Calu3 (cell line): ENCODE measurements at regions of chr1 and their contacts with region 1.

Region 1: DNA sequence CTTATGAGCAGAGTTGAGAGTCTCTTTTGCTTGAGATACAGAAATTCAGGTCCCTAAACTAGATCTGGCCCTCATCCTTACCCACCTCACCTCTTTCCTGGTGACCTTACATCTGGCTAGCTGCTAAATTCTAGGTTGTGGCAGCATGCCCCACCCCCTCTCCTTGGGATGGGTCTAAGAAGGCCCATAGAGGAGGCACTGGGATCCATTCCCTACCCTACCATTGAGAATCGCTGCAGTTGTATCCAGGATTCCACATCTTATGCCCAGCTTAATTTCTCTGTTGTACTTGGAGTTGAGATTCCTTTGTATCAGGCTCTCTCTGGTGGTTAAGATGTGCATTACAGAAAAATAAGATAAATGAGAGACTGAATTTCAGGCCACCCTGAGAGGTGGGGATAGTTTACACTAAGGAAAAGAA is 9.5 kb upstream of the TMEM39B start:
- DNase-seq: no peak
- H3K4me3 Mint-ChIP-seq: no peak overlapping the region
- H3K27ac Mint-ChIP-seq: peak overlapping the region; percentile 49
- H3K4me1 Mint-ChIP-seq: peaks cover 21% of the 10 kb centered on the region
- H3K27me3 Mint-ChIP-seq: no peaks in the 10 kb centered on the region
- CTCF ChIP-seq: peak; percentile 64

Region 2: DNA sequence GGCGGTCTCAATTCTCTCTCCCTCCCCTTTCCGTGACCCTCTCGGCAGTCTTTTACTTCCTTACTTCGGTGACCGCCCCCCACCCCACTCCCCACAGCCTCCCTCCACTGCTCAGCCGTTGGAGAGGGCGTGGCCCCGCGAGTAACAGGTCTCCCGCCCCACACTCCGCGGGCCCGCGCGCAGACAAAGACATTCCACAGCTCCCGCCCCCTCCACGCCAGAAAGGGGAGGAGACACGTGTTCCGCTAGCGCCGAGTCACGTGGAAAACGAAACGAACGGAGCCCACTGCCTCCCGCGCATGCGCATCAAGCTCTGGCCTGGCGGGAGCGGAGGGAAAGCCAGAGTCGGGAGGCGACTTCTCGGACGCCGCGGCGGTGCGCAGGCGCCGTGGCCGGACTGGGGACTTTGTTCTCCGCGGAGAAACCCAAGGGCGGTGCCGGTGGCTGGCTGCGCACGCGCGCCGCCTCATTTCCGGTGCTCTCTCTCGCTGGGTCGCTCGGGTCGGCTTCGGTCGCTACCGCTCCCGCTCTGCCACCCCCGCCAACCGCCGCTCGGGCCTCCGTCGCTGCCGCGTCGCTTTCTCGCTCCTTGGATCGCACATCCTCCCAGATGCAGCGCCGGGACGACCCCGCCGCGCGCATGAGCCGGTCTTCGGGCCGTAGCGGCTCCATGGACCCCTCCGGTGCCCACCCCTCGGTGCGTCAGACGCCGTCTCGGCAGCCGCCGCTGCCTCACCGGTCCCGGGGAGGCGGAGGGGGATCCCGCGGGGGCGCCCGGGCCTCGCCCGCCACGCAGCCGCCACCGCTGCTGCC is 49.7 kb before region 1 on chr1 and contains the start of gene KHDRBS1:
- CTCF ChIA-PET with region 1: interaction called, 6 read pairs
- intact Hi-C with region 1: loop called (anchors 5 kb)
- DNase-seq: peak; percentile 98
- H3K4me3 Mint-ChIP-seq: peak within 1 kb of the TSS; percentile 98
- H3K27ac Mint-ChIP-seq: peak within 1 kb of the TSS; percentile 93
- H3K4me1 Mint-ChIP-seq: peaks cover 21% of the 10 kb centered on the region
- H3K27me3 Mint-ChIP-seq: no peaks in the 10 kb centered on the region
- CTCF ChIP-seq: no peak
- total RNA-seq, gene KHDRBS1: 158 and 159 TPM in 2 replicates

Region 3: GRCh38 chr1:32107742-32108661 is 44.7 kb after region 1 on chr1 and contains the start of gene KPNA6:
- CTCF ChIA-PET with region 1: interaction called, 3 read pairs
- intact Hi-C with region 1: loop called (anchors 2 kb)
- DNase-seq: peak; percentile 88
- H3K4me3 Mint-ChIP-seq: peak within 1 kb of the TSS; percentile 98
- H3K27ac Mint-ChIP-seq: peak within 1 kb of the TSS; percentile 81
- H3K4me1 Mint-ChIP-seq: peaks cover 10% of the 10 kb centered on the region
- H3K27me3 Mint-ChIP-seq: no peaks in the 10 kb centered on the region
- CTCF ChIP-seq: no peak
- total RNA-seq, gene KPNA6: 84.3 and 84.4 TPM in 2 replicates